A549 (cell line): ENCODE measurements at regions of chr7 and their contacts with region 1.

Region 1: DNA sequence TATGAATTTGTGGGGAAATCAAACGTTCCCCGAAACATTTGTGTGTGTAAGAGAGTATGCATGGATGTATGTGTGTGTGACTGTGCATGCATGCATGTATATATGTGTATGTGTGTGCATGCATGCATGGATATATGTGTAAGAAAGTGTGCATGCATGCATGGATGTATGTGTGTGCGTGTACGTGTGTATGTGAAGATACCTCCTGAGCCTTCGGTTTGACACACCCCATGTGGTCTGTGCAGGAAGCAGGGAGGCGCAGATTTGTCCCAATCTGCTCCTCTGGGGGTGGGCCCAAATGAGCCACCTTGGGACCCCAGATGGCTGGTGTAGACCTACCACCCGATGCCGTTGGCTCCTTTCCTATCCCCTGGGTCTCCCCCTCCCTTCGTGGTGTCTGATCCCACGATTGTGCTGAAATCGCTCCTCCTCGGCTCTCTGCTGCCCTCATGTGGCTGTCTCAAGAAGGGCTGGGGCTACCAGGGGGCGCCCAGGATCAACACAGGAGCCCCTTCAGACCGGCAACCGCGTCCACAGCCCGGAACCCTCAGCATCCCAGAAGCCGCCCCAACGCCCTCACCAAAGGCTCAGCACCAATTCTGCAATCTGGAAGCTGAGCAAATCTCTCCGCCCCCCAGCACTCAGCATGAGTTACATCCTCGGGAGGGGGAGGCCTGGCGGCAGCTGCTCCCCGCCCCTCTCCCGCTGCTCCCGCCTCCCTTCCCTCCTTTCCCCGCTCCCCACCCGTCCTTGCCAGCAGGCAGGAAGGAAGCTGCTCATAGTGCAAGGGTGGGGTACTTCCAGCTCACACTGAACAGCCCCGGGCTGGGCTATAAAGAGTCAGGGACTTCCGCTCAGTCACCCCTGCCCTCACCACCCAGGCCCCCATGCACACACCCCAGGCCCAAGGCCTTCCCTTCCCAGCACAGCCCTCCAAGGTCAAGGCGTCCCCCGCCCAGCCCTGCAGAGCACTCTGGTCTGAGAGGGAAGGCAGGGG is 2.3 kb upstream of the NOS3 start:
- DNase-seq: peak in 1 of 2 experiments; percentile 36
- ATAC-seq: peak; percentile 5 to 69; a peak in 4 of 6 replicates
- H3K4me3 ChIP-seq: no peak overlapping the region
- H3K27ac ChIP-seq: no peak overlapping the region
- H3K4me1 ChIP-seq: no peaks in the 10 kb centered on the region
- CTCF ChIP-seq: peak; percentile 62
- EP300 ChIP-seq: no peak
- POLR2A ChIP-seq: no peak
- RAD21 ChIP-seq: peak; percentile 64 to 77

Region 2: GRCh38 chr7:150356265-150356897 is 632.1 kb before region 1 on chr7:
- CTCF ChIA-PET with region 1: no interaction called
- POLR2A ChIA-PET with region 1: no interaction called
- DNase-seq: peak; percentile 40 to 41
- ATAC-seq: peak in 1 of 2 experiments; percentile 73; a peak in 3 of 6 replicates
- H3K4me3 ChIP-seq: no peak overlapping the region
- H3K27ac ChIP-seq: no peak overlapping the region
- H3K4me1 ChIP-seq: peaks cover 3% of the 10 kb centered on the region; the same call in 1 of the 3 replicates
- CTCF ChIP-seq: peak; percentile 78
- EP300 ChIP-seq: no peak
- POLR2A ChIP-seq: no peak
- RAD21 ChIP-seq: peak; percentile 49 to 50

Region 3: GRCh38 chr7:150420987-150421674 is 567.4 kb before region 1 on chr7:
- CTCF ChIA-PET with region 1: no interaction called
- POLR2A ChIA-PET with region 1: no interaction called
- DNase-seq: peak; percentile 79 to 92
- ATAC-seq: peak; percentile 99 to 100
- H3K4me3 ChIP-seq: no peak overlapping the region
- H3K27ac ChIP-seq: 0 out of 6 replicates have a peak overlapping the region, but pooled peaks of 1 of the 2 experiments have one; percentile 43
- H3K4me1 ChIP-seq: peaks cover 5% of the 10 kb centered on the region; the same call in 1 of the 3 replicates
- CTCF ChIP-seq: peak; percentile 92
- EP300 ChIP-seq: no peak
- POLR2A ChIP-seq: no peak
- RAD21 ChIP-seq: peak; percentile 85 to 89

Region 4: GRCh38 chr7:150898475-150899011 is 90.0 kb before region 1 on chr7:
- CTCF ChIA-PET with region 1: interaction called, 14 read pairs
- POLR2A ChIA-PET with region 1: no interaction called
- DNase-seq: peak; percentile 68 to 79
- ATAC-seq: peak; percentile 83 to 95
- H3K4me3 ChIP-seq: no peak overlapping the region
- H3K27ac ChIP-seq: no peak overlapping the region
- H3K4me1 ChIP-seq: no peaks in the 10 kb centered on the region
- CTCF ChIP-seq: peak; percentile 84
- EP300 ChIP-seq: no peak
- POLR2A ChIP-seq: no peak
- RAD21 ChIP-seq: peak; percentile 73 to 74

Region 5: DNA sequence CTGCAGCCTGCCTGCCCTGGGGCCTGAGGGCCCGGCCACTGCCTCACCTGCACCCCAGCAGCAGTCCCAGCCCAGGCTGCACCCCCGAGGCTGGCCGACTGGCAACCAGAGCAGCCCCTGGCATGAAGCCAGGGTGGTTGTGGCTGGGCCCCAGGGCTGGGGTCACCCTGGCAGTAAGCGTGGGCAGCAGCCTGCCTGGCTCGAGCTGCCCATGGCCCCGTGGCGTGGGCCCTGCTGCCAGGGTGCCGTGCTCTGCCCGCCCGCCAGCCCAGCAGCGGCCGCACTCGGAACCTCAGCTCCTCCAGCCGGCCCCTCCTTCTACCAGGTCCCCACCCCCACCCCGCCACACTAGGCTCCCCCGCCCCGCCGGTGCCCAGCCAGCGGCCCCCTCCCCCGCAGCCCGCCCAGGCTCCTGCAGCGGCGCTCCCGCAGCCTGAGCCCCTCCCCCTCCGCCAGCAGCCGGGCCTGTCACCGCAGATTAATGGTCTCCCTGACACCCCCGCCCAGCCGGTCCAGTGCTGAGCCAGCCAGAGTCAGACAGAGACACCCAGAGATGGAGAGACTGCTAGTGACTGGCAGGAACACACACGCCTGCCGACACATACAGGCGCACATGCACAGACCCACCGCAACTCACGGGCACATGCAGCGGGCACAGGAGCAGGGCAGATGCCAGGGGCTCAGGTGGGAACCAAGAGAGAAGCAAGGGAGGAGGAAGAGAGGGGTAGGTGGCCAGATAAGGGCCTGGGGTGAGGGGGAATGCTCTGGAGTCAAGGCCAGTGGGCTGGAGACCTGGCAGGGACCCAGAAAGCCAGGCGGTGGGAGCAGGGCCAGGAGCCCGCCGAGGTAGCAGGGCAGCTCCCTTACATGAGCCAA is 32.8 kb before region 1 on chr7:
- CTCF ChIA-PET with region 1: interaction called, 95 read pairs
- POLR2A ChIA-PET with region 1: no interaction called
- DNase-seq: no peak
- ATAC-seq: no peak
- H3K4me3 ChIP-seq: no peak overlapping the region
- H3K27ac ChIP-seq: no peak overlapping the region
- H3K4me1 ChIP-seq: no peaks in the 10 kb centered on the region
- CTCF ChIP-seq: no peak
- EP300 ChIP-seq: no peak
- POLR2A ChIP-seq: no peak
- RAD21 ChIP-seq: no peak

Region 6: GRCh38 chr7:150968734-150969372 is 19.7 kb before region 1 on chr7:
- CTCF ChIA-PET with region 1: interaction called, 95 read pairs
- POLR2A ChIA-PET with region 1: no interaction called
- DNase-seq: no peak
- ATAC-seq: no peak
- H3K4me3 ChIP-seq: no peak overlapping the region
- H3K27ac ChIP-seq: no peak overlapping the region
- H3K4me1 ChIP-seq: no peaks in the 10 kb centered on the region
- CTCF ChIP-seq: no peak
- EP300 ChIP-seq: no peak
- POLR2A ChIP-seq: no peak
- RAD21 ChIP-seq: no peak

Region 7: GRCh38 chr7:150974468-150975391 is 13.8 kb before region 1 on chr7:
- CTCF ChIA-PET with region 1: interaction called, 22 read pairs
- POLR2A ChIA-PET with region 1: no interaction called
- DNase-seq: peak; percentile 44 to 71
- ATAC-seq: peak; percentile 54 to 77
- H3K4me3 ChIP-seq: peak overlapping the region; percentile 83
- H3K27ac ChIP-seq: peak overlapping the region; percentile 74 to 84
- H3K4me1 ChIP-seq: peaks cover 34% of the 10 kb centered on the region
- CTCF ChIP-seq: peak; percentile 40
- EP300 ChIP-seq: no peak
- POLR2A ChIP-seq: peak; percentile 91
- RAD21 ChIP-seq: no peak

Region 8: GRCh38 chr7:151008511-151009323 is 20.2 kb after region 1 on chr7:
- CTCF ChIA-PET with region 1: interaction called, 10 read pairs
- POLR2A ChIA-PET with region 1: no interaction called
- DNase-seq: peak; percentile 41 to 50
- ATAC-seq: peak in 1 of 2 experiments; percentile 74; a peak in 3 of 6 replicates
- H3K4me3 ChIP-seq: no peak overlapping the region
- H3K27ac ChIP-seq: no peak overlapping the region
- H3K4me1 ChIP-seq: peaks cover 23% of the 10 kb centered on the region; the same call in 1 of the 3 replicates
- CTCF ChIP-seq: peak; percentile 41; the same call in 2 of the 3 replicates
- EP300 ChIP-seq: no peak
- POLR2A ChIP-seq: no peak
- RAD21 ChIP-seq: no peak

Region 9: DNA sequence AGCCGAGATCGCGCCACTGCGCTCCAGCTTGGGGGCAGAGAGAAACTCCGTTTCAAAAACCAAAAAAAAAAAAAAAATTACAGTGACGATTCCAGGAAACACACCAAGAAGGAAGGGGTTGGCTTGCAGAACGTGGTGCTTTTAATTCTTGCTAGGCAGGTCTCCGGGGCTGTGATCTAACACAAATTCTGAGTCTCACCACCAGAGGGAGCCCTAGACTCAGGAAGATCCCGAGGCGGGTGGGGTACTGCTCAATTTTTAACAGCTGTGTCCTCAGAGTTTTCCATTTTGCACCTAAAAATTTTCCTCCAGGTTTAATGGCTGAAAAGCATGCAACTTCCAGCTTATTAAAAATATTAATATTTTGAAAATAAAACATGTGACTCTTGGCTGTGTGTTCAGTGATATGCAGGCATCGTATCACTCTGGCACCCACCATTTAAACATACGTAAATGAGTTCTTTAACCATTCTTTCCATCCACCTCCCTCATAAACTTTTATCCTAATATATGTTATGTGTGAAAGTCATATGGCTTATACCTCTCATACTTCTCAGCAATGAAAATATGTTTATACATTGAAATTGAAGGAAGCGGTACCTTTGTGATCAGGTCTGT is 326.6 kb after region 1 on chr7:
- CTCF ChIA-PET with region 1: no interaction called
- POLR2A ChIA-PET with region 1: no interaction called
- DNase-seq: peak; percentile 70 to 78
- ATAC-seq: peak; percentile 82 to 93; a peak in 5 of 6 replicates
- H3K4me3 ChIP-seq: no peak overlapping the region
- H3K27ac ChIP-seq: no peak overlapping the region
- H3K4me1 ChIP-seq: 0 out of 3 replicates have a peak, but pooled peaks cover 3% of the 10 kb centered on the region
- CTCF ChIP-seq: peak; percentile 93
- EP300 ChIP-seq: no peak
- POLR2A ChIP-seq: no peak
- RAD21 ChIP-seq: peak; percentile 84 to 90